CD4-positive, alpha-beta T cell (primary cell): ENCODE measurements at regions of chr6 and their contacts with region 1.

Region 1: DNA sequence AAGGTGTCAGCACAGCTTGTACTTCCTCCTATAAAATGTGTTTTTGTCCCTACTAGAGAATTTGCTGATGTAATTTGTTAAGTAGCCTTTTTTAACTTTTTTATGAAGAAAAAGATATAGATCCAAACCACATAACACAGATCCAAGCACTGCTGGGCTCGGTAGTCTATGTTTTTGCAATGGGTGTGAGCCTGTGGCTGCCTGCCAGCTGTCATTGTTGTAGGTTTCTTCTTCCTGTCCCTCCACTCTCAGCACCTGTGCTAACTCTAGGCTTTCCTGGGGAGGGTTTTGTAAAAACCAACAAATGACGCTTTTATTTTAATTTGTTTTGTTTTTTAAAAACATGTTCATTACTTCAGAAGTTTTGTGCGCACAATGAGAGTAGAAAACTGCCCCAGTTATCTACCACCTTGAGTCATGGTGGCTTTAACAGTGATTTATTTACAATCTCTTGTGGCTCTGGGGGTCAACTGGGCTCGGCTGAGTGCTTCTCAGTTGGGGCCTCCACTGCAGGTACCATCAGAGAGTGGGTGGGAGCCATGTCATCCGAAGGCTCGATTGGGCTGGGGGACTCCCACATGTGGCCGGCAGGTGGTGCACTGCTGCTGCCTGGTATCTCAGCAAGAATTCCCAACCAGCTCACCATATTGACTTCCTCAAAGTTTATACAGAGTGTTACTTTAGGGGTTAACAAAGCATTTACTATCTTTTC is 3.1 kb upstream of the CCR6 start:
- DNase-seq: peak; percentile 40 to 85 (median 60)
- ATAC-seq: peak; percentile 92
- H3K4me3 ChIP-seq: no peak overlapping the region
- H3K4me3 Mint-ChIP-seq: peak overlapping the region; percentile 32
- H3K27ac ChIP-seq: peak overlapping the region; percentile 51 to 73
- H3K27ac Mint-ChIP-seq: peak overlapping the region; percentile 95
- H3K4me1 ChIP-seq: peaks cover 84% of the 10 kb centered on the region
- H3K4me1 Mint-ChIP-seq: peaks cover 66% of the 10 kb centered on the region
- H3K27me3 ChIP-seq: no peaks in the 10 kb centered on the region
- H3K27me3 Mint-ChIP-seq: no peaks in the 10 kb centered on the region
- CTCF ChIP-seq: no peak

Region 2: DNA sequence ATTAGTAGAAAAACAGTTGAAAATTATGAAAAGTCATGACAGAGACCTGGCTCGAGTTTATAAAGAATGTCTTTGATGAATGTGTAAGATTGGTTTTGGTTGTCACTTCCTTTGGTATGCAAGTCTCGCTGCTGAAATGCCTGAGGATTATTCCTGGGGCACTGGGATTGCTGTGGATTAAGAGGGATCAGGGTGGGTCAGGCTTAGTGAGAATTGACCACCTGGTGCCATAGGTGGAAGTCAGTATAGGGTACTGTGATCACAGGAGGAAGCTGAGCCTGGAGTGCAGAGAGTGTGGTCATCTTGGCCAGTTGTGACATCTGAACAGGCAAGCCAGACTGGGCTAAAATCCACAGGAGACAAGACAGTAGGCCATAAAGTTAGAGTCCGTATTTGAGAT is 85.8 kb before region 1 on chr6:
- CTCF ChIA-PET with region 1: no interaction called
- POLR2A ChIA-PET with region 1: no interaction called
- intact Hi-C with region 1: no loop called
- DNase-seq: no peak
- ATAC-seq: no peak
- H3K4me3 ChIP-seq: no peak overlapping the region
- H3K4me3 Mint-ChIP-seq: no peak overlapping the region
- H3K27ac ChIP-seq: no peak overlapping the region
- H3K27ac Mint-ChIP-seq: no peak overlapping the region
- H3K4me1 ChIP-seq: no peaks in the 10 kb centered on the region
- H3K4me1 Mint-ChIP-seq: no peaks in the 10 kb centered on the region
- H3K27me3 ChIP-seq: no peaks in the 10 kb centered on the region
- H3K27me3 Mint-ChIP-seq: no peaks in the 10 kb centered on the region
- CTCF ChIP-seq: no peak

Region 3: DNA sequence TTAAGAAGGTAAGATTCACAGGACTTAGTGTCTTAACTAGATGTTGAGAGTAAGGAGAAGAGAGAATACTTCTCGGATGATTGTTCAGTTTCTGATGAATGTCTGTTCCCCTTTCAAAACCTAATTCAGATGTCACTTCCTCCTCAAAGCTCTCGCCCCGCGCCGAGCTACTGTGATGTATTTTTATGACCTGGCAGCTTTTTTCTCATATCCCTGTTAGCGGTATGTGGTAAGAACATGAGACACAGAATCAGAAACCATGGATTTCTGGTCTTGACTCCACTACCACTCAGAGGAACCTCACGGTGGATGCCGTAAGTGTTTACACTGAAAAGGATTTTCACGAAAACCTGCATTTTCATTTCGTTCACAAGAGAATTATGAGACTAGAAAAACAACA is 72.3 kb before region 1 on chr6:
- CTCF ChIA-PET with region 1: no interaction called
- POLR2A ChIA-PET with region 1: interaction called, 8 read pairs
- intact Hi-C with region 1: loop called in 1 of 2 experiments (anchors 5 kb)
- DNase-seq: peak in 13 of 14 experiments; percentile 23 to 79 (median 43)
- ATAC-seq: peak; percentile 91
- H3K4me3 ChIP-seq: peak overlapping the region; percentile 29
- H3K4me3 Mint-ChIP-seq: peak overlapping the region; percentile 40
- H3K27ac ChIP-seq: peak overlapping the region in 1 of 2 donors; percentile 63
- H3K27ac Mint-ChIP-seq: peak overlapping the region; percentile 78
- H3K4me1 ChIP-seq: peaks cover 30% of the 10 kb centered on the region
- H3K4me1 Mint-ChIP-seq: peaks cover 53% of the 10 kb centered on the region
- H3K27me3 ChIP-seq: no peaks in the 10 kb centered on the region
- H3K27me3 Mint-ChIP-seq: no peaks in the 10 kb centered on the region
- CTCF ChIP-seq: no peak